ENCODE measurements at regions of chr19 and their contacts with region 1.

Region 1: DNA sequence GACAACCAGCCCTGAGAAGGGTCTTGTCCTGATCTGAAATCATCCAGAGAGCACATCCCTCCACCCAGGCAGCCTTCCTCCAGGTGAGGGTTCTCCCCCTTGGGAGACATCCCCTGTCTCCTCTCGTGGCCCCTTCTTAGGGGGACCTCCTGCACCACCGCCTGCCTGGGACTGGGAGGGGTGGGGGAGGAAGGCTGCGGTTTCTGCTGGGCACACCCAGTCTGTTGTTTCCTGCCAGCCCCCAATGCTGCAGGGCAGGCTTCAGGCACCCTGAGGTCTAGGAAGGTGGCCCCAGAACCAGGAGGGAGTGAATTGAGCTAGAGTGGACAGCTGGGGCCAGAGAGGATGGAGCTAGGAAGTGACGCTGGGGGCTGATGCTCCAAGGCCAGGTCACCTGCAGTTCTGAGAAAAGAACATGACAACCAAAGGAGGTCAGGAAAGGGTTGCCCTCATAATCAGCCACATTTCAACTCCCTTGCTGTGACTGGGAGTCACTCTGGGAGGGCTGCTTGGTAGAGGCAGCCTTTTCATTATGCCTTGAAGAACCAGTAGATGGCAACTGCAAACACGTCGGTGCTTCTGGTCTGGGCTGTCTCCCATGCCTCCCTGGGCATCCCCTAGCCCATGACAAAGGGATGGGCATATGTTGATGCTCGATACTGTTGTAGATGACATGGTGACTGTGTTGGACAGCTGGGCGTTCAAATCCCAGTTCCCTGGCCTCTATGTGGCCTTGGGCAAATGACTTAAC is 1.4 kb downstream of the ARHGEF18 start:
- DNase-seq: peak in 2 of 5 donors; percentile 9 to 17
- H3K4me3 ChIP-seq: no peak overlapping the region
- H3K27ac ChIP-seq: no peak overlapping the region
- H3K4me1 ChIP-seq: no peaks in the 10 kb centered on the region
- H3K27me3 ChIP-seq: no peaks in the 10 kb centered on the region
- CTCF ChIP-seq: no peak
- EP300 ChIP-seq: no peak
- POLR2A ChIP-seq: no peak

Region 2: GRCh38 chr19:7415163-7415858 is 65.2 kb after region 1 on chr19:
- intact Hi-C with region 1: no loop called
- DNase-seq: peak in 4 of 5 donors; percentile 36 to 56 (median 41)
- H3K4me3 ChIP-seq: no peak overlapping the region
- H3K27ac ChIP-seq: peak overlapping the region in 1 of 2 donors; percentile 20
- H3K4me1 ChIP-seq: peaks cover 5% of the 10 kb centered on the region
- H3K27me3 ChIP-seq: no peaks in the 10 kb centered on the region
- CTCF ChIP-seq: no peak
- EP300 ChIP-seq: no peak
- POLR2A ChIP-seq: no peak

Region 3: DNA sequence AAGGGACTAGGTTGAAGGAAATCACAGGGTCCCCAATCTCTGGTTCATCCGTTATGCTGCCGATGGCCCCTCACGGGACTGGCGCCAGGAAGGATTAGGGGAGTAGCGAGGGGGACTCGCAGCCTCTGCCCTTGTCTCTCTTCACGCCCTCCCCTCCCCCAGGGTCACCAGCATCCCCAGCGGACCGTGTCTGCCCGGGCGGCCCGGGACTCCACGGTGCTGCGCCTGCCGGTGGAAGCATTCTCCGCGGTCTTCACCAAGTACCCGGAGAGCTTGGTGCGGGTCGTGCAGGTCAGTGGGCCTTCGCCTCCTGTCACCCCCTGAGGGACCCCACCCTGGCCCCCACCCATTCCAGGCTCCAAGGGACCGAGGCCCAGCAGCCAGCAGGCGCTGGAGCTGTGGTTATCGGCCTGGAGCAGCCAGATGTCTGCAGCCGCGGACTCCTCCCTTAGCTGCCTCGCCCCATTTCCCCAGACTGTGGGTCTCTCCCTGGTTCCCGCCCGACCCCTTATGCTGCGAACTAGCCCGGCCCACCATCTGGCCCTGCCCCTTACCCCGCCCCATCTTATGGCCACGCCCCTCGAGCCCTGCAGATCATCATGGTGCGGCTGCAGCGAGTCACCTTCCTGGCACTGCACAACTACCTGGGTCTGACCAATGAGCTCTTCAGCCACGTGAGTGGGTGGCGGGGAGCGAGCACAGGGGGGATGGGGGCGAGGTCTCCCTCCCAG is 190.8 kb after region 1 on chr19:
- intact Hi-C with region 1: loop called in 1 of 4 experiments (anchors 10 kb)
- DNase-seq: peak in 3 of 5 donors; percentile 10 to 42 (median 31)
- H3K4me3 ChIP-seq: no peak overlapping the region
- H3K27ac ChIP-seq: no peak overlapping the region
- H3K4me1 ChIP-seq: no peaks in the 10 kb centered on the region
- H3K27me3 ChIP-seq: no peaks in the 10 kb centered on the region
- CTCF ChIP-seq: no peak
- EP300 ChIP-seq: no peak
- POLR2A ChIP-seq: no peak

Region 4: GRCh38 chr19:7674010-7675005 is 324.2 kb after region 1 on chr19:
- intact Hi-C with region 1: loop called in 2 of 4 experiments (anchors 5 to 10 kb)
- DNase-seq: no peak
- H3K4me3 ChIP-seq: no peak overlapping the region
- H3K27ac ChIP-seq: no peak overlapping the region
- H3K4me1 ChIP-seq: no peaks in the 10 kb centered on the region
- H3K27me3 ChIP-seq: no peaks in the 10 kb centered on the region
- CTCF ChIP-seq: no peak
- EP300 ChIP-seq: no peak
- POLR2A ChIP-seq: no peak

Measured in ovary (tissue), 10 donors.